B cell (primary cell): ENCODE measurements at regions of chr22 and their contacts with region 1.

Region 1: DNA sequence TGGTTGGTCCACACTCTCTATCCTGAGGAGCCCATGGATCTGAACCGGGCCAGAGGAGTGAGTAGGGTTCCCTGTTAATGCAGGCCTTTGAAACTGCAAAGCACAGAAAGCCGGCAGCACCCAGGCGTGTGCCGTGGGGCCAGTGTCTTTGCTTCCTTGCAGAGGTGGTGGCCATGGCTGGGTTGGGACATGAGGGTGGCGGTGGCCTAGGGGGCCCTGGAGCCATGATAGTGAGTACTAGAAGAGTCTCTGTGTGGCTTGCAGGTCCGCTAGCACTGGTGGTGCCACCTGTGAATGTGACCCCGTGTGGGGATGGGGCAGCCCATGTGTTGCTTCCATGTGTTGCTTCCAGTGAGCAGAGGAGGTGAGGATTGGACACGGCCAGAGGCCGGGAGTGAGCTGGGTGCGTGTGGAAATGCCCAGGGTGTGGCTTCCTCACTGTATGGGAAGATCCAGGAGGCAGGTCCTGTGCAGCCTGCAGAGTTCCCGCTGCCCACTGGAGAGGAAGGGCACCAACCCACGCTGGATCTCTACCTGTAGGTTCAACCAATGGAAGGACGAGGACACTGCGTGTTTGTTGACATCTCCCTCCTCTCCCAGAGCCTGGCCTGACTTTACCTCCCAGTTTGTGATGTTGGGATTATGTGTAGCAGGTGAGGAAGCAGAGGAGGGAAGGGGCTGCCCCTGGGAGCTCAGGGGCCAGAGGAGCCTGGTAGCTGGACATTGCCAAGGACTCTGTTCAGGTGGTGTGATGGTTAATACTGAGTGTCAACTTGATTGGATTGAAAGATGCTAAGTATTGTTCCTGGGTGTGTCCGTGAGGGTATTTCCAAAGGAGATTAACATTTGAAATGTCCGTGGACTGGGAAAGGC is 796.6 kb downstream of the TBC1D22A start:
- DNase-seq: no peak
- ATAC-seq: no peak
- H3K4me3 ChIP-seq: no peak overlapping the region
- H3K4me3 Mint-ChIP-seq: no peak overlapping the region
- H3K27ac ChIP-seq: no peak overlapping the region
- H3K27ac Mint-ChIP-seq: no peak overlapping the region
- H3K4me1 ChIP-seq: no peaks in the 10 kb centered on the region
- H3K4me1 Mint-ChIP-seq: no peaks in the 10 kb centered on the region
- H3K27me3 ChIP-seq: no peaks in the 10 kb centered on the region
- H3K27me3 Mint-ChIP-seq: peaks cover 3% of the 10 kb centered on the region
- CTCF ChIP-seq: no peak

Region 2: DNA sequence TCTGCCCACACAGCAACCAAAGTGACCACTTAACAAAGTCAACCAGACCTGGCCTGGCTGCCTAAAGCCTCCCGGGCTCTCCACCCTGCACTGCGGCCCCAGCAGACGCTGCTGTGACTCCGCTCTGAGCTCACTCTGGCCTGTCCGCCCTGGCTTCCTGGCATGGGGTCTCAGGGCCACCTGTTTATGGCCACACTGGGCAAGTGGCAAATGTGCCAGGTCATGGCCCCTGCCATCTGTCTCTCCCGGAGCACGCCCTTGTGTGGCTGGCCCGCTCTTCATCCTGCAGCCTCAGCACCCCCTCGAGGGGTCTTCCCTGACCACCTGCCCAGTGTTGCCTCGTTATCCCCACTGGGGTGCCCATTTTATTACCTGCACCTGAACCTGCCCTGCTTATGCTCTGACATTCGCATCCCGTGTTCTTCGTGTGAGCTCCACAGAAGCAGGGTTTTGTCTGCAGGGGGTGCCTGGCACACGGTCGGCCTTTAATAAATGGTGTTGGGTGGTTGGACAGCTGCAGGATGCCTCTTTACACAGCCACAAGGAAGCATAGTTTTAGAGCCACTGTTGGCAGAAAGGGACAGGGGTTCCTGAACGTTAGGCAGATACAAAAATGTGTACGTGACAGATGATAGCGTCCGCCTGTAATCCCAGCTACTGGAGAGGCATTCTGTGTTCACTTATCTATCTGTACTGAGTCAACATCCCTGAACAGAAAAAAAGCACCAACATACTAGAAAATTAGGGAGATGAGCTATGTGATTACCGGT is 11.0 kb before region 1 on chr22:
- CTCF ChIA-PET with region 1: no interaction called
- POLR2A ChIA-PET with region 1: no interaction called
- intact Hi-C with region 1: no loop called
- DNase-seq: no peak
- ATAC-seq: no peak
- H3K4me3 ChIP-seq: no peak overlapping the region
- H3K4me3 Mint-ChIP-seq: no peak overlapping the region
- H3K27ac ChIP-seq: no peak overlapping the region
- H3K27ac Mint-ChIP-seq: no peak overlapping the region
- H3K4me1 ChIP-seq: no peaks in the 10 kb centered on the region
- H3K4me1 Mint-ChIP-seq: no peaks in the 10 kb centered on the region
- H3K27me3 ChIP-seq: no peaks in the 10 kb centered on the region
- H3K27me3 Mint-ChIP-seq: no peaks in the 10 kb centered on the region
- CTCF ChIP-seq: no peak

Region 3: GRCh38 chr22:47631557-47632344 is 72.7 kb after region 1 on chr22:
- CTCF ChIA-PET with region 1: no interaction called
- POLR2A ChIA-PET with region 1: no interaction called
- intact Hi-C with region 1: loop called (anchors 2 kb)
- DNase-seq: no peak
- ATAC-seq: no peak
- H3K4me3 ChIP-seq: no peak overlapping the region
- H3K4me3 Mint-ChIP-seq: no peak overlapping the region
- H3K27ac ChIP-seq: no peak overlapping the region
- H3K27ac Mint-ChIP-seq: no peak overlapping the region
- H3K4me1 ChIP-seq: no peaks in the 10 kb centered on the region
- H3K4me1 Mint-ChIP-seq: no peaks in the 10 kb centered on the region
- H3K27me3 ChIP-seq: peaks cover 0 to 4% (median 0%) of the 10 kb centered on the region in 4 experiments
- H3K27me3 Mint-ChIP-seq: peaks cover 5% of the 10 kb centered on the region
- CTCF ChIP-seq: no peak